Body of pancreas (tissue), 4 donors: ENCODE measurements at regions of chr11 and their contacts with region 1.

Region 1: DNA sequence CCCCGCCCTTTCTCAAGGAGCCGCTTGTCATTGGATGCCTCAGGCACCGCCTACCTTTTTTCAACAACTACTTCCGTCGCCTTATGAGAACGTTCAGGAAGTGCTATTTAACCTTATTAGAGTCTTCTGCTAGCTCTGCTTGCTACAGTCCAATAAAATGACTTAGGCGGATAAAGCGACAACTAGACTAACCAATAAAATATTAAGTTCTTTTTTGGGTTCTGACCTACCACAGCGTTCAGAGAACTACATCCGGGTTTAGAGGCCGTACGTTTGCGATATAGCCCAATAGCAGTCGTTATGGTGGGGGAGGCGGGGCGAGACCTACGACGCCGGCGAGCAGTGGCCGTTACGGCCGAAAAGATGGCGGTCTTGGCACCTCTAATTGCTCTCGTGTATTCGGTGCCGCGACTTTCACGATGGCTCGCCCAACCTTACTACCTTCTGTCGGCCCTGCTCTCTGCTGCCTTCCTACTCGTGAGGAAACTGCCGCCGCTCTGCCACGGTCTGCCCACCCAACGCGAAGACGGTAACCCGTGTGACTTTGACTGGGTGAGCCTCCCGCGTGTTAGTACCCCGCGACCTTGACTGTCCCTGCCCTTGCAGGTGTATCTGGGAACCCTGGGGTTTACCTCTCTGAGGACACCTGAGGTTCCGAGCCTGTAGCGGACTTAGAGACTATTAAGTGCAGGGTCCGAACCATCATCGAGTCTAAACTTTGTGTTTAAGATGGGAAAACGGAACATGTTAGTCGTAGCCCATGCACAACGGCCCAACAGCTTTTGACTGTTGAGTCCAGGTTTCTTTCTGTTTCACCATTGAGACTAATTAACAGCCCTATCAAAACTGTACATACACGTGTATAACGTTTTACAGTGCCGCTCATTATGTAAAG is at the start of gene TMX2:
- DNase-seq: peak; percentile 93 to 97 (median 94)
- ATAC-seq: peak; percentile 96
- H3K4me3 ChIP-seq: peak within 1 kb of the TSS; percentile 89 to 96
- H3K27ac ChIP-seq: peak within 1 kb of the TSS; percentile 88 to 96 (median 94)
- H3K4me1 ChIP-seq: peaks cover 40% of the 10 kb centered on the region
- H3K27me3 ChIP-seq: no peaks in the 10 kb centered on the region
- CTCF ChIP-seq: no peak
- POLR2A ChIP-seq: peak; percentile 35 to 73 (median 67)
- total RNA-seq, gene TMX2: 32.9 to 46.8 TPM

Region 2: DNA sequence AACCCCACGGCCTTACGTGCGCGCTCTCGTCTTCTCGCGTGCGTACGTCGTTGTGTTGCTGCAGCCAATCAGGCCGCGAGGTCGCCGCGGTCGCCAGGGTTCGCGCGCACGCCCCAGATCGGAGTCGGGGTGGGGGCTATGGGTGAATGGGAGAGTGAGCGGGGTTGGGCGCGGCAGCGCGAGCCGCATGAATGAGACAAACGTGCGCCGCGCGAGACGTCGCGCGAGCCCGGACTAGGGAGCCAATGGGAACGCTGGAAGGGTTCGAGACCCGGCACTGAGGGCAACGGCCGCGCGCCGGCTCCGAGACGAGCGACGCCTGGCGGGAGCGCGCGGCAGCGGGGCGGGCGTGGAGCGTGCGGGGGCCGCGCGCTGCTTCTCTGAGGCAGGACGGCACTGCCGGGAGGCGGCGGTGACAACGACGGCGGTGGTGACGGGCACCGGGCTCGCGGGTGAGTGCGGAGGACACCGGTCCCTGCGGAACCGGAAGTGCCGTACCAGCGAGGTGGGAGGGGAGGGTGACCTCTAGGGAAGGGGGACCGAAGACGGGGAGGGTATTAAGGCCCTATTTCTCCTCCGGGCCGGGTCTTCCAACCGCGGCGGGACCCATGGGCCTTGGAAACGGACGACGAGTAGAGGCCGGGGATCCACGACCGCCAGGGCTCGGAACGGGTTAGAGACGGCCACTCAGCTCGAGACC is 44.6 kb before region 1 on chr11 and contains the start of gene ZDHHC5:
- intact Hi-C with region 1: loop called (anchors 10 kb)
- DNase-seq: peak; percentile 98 to 99 (median 99)
- ATAC-seq: peak; percentile 92
- H3K4me3 ChIP-seq: peak within 1 kb of the TSS; percentile 73 to 95
- H3K27ac ChIP-seq: peak within 1 kb of the TSS; percentile 97 to 99 (median 98)
- H3K4me1 ChIP-seq: peaks cover 25% of the 10 kb centered on the region
- H3K27me3 ChIP-seq: no peaks in the 10 kb centered on the region
- CTCF ChIP-seq: peak; percentile 23 to 68 (median 35)
- POLR2A ChIP-seq: peak; percentile 73 to 81 (median 78)
- total RNA-seq, gene ZDHHC5: 17.6 to 48.5 TPM